ENCODE measurements at regions of chr18 and their contacts with region 1.

Region 1: DNA sequence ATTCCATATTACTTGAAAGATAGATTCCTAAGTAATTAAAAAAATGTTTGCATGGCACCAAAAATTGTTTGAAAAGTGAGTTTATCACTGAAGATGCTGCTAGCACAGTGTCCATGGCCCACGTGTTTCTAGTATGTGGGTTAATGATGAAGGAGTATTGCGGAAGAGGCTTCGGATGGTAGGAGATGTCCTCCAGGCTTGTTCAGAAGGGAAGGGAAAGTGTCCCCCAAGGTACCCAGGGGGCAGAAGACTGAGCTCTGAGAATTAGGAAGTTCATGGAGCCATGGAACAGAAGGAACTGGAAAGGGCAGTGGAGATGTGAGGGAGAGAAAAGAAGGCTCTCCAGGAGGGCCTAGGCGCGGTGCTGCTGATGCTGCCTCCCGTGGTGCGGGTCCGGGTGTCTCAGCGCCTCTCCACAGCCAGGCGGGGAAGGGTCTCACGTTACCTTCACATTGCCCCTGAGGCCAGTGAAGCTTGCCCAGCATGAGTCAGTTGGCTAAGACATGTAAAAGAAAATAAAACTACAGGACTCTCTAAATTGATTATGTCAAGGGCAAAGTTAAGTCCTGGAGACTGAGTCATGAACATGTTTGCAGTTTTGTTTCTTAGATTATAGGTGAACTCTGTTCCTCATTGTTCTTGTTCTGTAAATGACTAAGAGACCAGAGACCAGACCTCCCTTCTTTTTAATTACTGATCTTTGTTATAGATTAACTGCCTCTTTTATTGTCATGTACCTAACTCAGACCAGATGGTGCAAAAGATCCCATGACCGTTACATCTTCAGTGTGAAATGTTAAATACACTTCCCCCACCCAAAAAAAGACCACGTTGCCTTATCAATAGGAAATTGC is 89.0 kb downstream of the MTCL1 start:
- DNase-seq: peak; percentile 66
- ATAC-seq: peak; percentile 18
- H3K4me3 ChIP-seq: peak overlapping the region in 2 of 3 experiments; percentile 34 to 46; a peak in 2 of 6 replicates
- H3K27ac ChIP-seq: no peak overlapping the region
- H3K4me1 ChIP-seq: peaks cover 69% of the 10 kb centered on the region
- H3K27me3 ChIP-seq: no peaks in the 10 kb centered on the region
- CTCF ChIP-seq: no peak
- EP300 ChIP-seq: no peak
- POLR2A ChIP-seq: no peak
- RAD21 ChIP-seq: no peak

Region 2: DNA sequence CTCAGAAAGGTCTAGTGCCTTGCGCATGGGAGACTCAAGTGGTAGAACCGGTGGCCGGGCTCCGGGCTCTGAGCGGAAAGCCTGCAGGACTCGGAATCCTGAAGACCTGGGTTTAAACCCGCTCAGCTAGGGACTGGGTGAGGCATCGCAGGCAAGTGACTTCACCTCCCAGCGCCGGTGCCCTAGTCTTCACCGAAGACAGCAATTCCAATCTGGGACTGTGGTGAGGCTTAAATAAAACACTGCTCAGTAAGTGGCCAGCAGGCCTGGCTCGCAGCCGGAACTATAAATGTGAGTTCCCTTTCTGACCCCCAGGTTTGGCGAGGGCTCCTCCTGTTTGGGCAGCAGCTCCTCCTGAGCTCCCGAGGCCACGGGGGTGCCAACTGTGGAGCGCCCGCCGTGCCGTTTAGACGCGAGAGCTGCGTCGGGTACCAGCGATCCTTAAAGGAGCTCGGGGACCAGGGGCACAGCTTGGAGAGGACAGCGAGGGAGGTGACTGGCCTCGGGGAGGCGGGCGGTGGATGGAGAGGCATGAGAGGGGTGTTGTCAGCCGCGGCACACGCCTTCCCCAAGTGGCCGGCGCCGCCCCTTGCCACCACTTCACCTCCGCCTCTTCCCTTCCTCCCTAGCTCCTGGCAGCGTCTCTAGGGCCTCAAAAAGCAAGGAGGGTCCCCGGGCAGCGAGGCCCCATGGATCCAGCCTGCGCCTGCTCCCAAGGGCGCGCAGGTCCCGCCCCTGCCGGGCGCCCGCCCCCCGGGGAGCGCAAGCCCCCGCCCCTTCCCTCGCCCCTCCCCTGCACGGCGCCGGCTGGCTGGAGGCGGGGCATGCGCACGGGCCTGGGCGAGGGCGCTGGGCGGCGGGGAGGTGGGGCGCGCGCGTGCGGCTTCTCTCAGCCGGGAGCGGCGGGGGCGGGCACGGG is 89.7 kb before region 1 on chr18:
- CTCF ChIA-PET with region 1: no interaction called
- POLR2A ChIA-PET with region 1: no interaction called
- in situ Hi-C with region 1: loop called (anchors 5 kb)
- intact Hi-C with region 1: loop called (anchors 10 kb)
- DNase-seq: peak; percentile 60
- ATAC-seq: peak; percentile 84
- H3K4me3 ChIP-seq: peak overlapping the region; percentile 62 to 77 (median 75)
- H3K27ac ChIP-seq: no peak overlapping the region
- H3K4me1 ChIP-seq: peaks cover 54% of the 10 kb centered on the region
- H3K27me3 ChIP-seq: peaks cover 0 to 38% of the 10 kb centered on the region in 2 experiments; a peak in 2 of 5 replicates
- CTCF ChIP-seq: 0 out of 2 replicates have a peak, but pooled peaks have one; percentile 19
- EP300 ChIP-seq: 0 out of 4 replicates have a peak, but pooled peaks of 1 of the 2 experiments have one; percentile 10
- POLR2A ChIP-seq: peak in 1 of 2 experiments; percentile 60; a peak in 1 of 4 replicates
- RAD21 ChIP-seq: no peak